Posterior vena cava (tissue), 2 donors: ENCODE measurements at regions of chr1 and their contacts with region 1.

Region 1: DNA sequence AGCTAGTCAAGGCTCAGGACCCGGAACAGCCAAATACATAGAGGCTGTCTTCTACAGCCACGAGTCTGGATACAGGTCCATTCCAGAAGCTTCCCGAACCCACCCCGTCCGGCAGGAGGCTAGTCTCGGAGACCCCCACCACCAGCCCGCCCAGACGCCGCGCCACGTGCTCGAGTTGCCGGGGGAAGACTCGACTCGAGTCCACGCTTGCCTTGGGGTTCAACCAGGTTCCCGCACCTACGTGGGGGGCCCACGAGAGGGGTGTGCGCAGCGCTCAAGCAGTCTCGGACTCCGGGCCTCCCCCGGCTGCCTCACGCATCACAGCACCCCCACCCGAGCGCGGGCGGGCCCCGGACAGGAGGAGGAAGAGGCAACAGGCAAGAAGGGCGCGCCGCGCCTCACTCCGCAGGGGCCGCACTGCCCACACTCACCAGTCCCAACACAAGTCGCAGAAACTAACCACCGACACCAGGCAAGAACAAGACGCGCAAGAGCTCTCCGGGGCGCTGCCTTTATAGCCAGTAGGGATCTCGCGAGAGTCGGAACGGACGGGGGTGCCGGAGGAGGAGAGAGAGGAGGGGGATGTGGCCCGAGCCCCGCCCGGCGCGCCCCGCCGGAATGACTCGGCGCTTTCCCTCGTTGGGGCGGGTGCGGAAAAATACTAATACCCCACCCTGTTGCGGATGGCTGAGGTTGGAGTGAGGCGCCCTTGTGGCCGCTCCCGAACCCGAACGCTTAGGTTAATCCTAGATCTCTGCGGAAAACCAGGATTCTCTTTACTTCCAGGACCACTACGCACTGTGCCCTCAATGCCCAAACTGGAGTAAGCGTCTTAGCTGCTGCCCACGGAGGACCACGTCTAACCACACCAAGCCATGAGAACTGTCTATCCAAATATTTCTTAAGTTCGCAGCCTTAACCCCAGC is at the start of gene PRDX1:
- DNase-seq: peak; percentile 100
- total RNA-seq, gene PRDX1: 255 to 329 TPM

Region 2: DNA sequence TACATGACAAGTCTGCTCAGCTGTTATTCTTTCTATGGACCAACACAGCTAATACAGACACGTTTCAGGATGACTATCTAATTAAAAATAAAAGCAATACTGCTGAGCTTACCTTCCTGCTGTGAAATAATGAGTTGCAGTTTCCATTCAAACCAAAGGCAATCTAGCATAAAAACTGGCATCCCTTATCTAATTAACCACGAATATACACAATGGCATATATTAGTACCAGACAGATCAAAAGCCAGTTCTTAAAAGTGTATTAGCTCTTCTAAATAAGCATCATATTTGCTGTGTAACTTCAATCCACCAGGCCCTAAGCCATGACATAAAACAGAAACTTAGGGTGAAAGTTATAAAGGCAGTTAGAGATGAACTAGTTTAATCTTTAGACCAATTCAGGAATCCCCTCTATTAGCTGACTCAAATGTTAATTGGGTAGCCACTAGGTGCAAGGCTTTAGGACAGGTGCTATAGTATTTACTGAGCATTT is 51.3 kb before region 1 on chr1:
- intact Hi-C with region 1: no loop called
- DNase-seq: no peak

Region 3: GRCh38 chr1:45569962-45570581 is 48.4 kb after region 1 on chr1:
- intact Hi-C with region 1: loop called (anchors 5 kb)
- DNase-seq: peak; percentile 88